Spleen (tissue), 13 donors: ENCODE measurements at regions of chr16 and their contacts with region 1.

Region 1: DNA sequence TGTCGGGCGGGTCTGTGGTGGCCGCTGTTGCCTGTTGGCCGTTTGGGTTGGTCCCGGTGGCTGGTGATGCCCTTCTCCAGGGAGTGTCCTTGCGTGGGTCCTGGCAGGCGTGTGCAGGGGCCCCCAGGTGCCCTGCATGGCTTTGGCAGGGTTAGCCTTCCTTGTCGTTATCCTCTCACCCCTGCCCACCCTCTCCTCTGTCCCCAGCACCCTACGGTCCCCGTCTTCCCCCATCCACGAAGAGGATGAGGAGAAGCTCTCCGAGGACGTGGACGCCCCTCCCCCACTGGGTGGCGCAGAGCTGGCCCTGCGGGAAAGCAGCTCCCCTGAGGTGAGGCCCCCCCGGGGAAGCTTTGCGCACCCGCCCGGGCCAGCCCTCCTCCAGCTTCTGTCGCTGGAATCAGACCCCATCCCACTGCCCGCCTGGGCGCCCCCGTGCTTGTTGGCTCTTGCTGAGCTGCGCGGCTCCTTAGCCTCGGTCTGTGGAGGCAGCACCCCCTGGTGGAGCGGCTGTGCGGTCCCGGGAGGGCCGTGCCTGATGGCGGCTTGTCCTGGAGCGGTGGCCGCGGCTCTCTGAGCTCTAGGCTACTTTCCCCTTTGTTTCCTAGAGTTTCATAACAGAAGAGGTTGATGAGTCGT is 10.6 kb upstream of the NUDT16L1 start:
- DNase-seq: peak; percentile 87
- H3K4me3 ChIP-seq: no peak overlapping the region
- H3K27ac ChIP-seq: peak overlapping the region in 5 of 8 donors; percentile 13 to 91 (median 87)
- H3K4me1 ChIP-seq: peaks cover 3 to 72% (median 49%) of the 10 kb centered on the region in 6 donors
- H3K27me3 ChIP-seq: no peaks in the 10 kb centered on the region
- CTCF ChIP-seq: peak in 10 of 11 experiments; percentile 37 to 77 (median 58)
- POLR2A ChIP-seq: no peak

Region 2: GRCh38 chr16:4616047-4616811 is 66.5 kb before region 1 on chr16:
- intact Hi-C with region 1: loop called (anchors 5 kb)
- DNase-seq: peak; percentile 99
- H3K4me3 ChIP-seq: peak overlapping the region; percentile 32 to 98 (median 90)
- H3K27ac ChIP-seq: peak overlapping the region; percentile 93 to 99 (median 97)
- H3K4me1 ChIP-seq: peaks cover 30 to 73% (median 59%) of the 10 kb centered on the region in 6 donors
- H3K27me3 ChIP-seq: no peaks in the 10 kb centered on the region
- CTCF ChIP-seq: peak in 10 of 11 experiments; percentile 20 to 69 (median 42)
- POLR2A ChIP-seq: peak in 2 of 3 donors; percentile 37 to 64

Region 3: DNA sequence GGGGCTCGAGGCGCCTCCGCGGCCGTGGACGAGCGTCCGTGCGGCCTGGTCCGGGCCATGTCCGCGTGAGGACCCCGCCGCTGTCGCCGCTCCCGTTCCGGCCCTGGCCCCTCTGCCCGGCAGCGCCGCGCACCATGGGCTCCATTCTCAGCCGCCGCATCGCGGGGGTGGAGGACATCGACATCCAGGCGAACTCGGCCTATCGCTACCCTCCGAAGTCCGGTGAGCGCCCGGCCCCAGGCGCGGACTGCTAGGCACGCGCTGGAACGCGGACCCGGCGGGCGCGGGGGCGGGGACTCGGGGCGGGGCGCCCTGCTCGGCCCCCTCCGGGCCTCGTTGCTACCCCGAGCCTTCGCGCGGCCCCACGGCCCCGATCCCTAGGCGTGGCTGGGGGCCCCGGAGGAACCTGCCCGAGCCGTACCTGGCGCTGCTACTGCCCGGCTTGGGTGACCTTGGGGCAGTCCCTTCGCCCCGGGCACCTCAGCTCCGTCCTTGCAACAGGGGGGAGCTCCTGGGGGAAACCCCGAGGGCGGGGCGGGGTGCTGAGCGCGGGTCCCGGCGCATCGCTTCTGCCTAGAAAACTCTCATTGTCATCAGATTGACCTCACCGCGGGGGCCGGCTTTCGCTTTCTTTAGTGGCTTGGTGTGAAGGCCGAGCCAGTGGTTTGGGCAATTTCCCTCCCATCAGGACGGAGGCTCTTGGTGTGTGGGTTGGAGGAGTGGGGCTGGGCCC is 57.7 kb before region 1 on chr16:
- intact Hi-C with region 1: loop called (anchors 5 kb)
- DNase-seq: peak; percentile 95
- H3K4me3 ChIP-seq: peak overlapping the region; percentile 72 to 97 (median 93)
- H3K27ac ChIP-seq: peak overlapping the region; percentile 90 to 100 (median 99)
- H3K4me1 ChIP-seq: peaks cover 20 to 64% (median 41%) of the 10 kb centered on the region in 6 donors
- H3K27me3 ChIP-seq: no peaks in the 10 kb centered on the region
- CTCF ChIP-seq: no peak
- POLR2A ChIP-seq: peak in 2 of 3 donors; percentile 46 to 85

Region 4: DNA sequence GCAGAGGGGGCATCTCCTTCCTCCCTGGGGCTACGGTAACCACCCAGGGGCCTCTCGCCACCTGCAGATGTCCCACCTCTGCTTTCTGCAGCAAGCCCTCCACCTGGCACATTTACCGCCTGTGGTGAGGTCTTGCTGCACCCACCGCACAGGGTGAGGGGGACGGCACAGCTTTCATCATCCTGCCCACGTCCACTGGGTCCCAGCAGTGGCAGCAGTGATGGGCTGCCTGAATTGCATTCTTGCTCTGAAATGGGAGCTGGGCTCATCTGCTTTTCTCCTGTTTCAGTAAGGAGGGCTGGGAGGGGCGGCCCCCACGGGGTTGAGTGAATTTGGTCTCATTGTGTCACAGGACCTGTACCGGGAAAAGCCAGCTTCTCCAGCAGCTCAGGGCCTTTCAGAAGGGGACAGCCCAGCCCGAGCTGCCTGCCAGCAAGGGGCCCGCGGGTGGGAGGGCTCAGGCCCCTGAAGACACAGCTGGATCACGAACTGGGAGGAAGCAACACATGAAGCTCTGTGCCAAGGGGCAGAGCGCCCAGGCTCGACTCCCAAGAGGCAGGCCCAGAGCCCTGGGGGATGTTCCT is 64.3 kb after region 1 on chr16:
- intact Hi-C with region 1: no loop called
- DNase-seq: no peak
- H3K4me3 ChIP-seq: no peak overlapping the region
- H3K27ac ChIP-seq: peak overlapping the region in 4 of 8 donors; percentile 23 to 65 (median 46)
- H3K4me1 ChIP-seq: peaks cover 0 to 51% (median 21%) of the 10 kb centered on the region in 6 donors
- H3K27me3 ChIP-seq: no peaks in the 10 kb centered on the region
- CTCF ChIP-seq: no peak
- POLR2A ChIP-seq: no peak